Right ventricle myocardium superior (tissue), 1 donor: ENCODE measurements at regions of chr1 and their contacts with region 1.

Region 1: GRCh38 chr1:108559215-108560186 is at the start of gene EEIG2:
- DNase-seq: peak; percentile 92
- ATAC-seq: peak; percentile 97
- total RNA-seq, gene EEIG2: 5.1 TPM

Region 2: DNA sequence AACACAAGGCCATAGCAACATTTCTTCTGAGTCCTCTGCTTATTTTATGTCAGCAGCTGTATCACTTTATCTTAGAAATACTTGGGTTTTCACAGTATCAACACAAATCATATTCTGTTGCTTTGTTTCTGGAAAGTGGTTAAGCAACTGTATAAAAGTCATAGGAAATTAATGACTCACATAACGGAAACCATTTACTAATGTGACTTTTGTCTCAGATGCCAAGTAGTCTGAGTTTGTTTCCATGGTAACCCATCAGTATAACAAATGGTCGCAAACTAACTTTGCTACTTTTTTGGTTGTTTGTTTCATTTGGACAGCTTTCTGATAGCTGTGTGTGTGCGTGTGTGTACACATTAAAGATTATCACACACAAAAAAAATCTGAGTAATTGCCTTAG is 31.5 kb after region 1 on chr1:
- intact Hi-C with region 1: loop called (anchors 5 kb)
- DNase-seq: no peak
- ATAC-seq: peak; percentile 79

Region 3: GRCh38 chr1:108639899-108640560 is 80.5 kb after region 1 on chr1:
- intact Hi-C with region 1: no loop called
- DNase-seq: no peak
- ATAC-seq: no peak